PC-9 (cell line): ENCODE measurements at regions of chr6 and their contacts with region 1.

Region 1: GRCh38 chr6:138188278-138188941 is 26.7 kb downstream of the ARFGEF3 start:
- DNase-seq: peak in 1 of 2 experiments; percentile 43
- H3K4me3 ChIP-seq: no peak overlapping the region
- H3K27ac ChIP-seq: no peak overlapping the region
- H3K4me1 ChIP-seq: peaks cover 10% of the 10 kb centered on the region
- H3K27me3 ChIP-seq: no peaks in the 10 kb centered on the region
- CTCF ChIP-seq: no peak

Region 2: DNA sequence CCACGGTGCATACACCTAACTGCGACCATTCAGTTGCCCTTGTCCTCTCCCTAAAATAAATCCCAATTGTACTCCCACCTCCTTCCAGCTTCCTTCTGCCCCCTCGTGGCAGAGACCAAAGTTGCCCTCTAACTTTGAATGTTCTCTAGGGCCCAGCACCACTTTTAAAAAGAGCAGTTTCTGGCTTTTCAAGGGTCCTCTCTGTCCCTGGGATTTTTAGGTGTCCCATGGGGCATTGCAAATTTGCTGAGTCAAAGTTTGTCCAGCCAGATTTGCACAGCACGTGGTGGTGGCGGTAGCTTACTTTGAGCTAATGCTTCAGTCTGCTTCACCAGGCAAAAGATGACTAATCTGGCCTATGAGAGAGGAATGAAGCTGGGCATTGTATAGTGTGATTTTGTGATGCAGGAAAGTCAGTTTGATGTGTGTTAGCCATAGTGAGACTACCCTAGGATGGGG is 181.4 kb before region 1 on chr6:
- CTCF ChIA-PET with region 1: interaction called, 15 read pairs
- POLR2A ChIA-PET with region 1: no interaction called
- intact Hi-C with region 1: no loop called
- DNase-seq: peak; percentile 38 to 45
- H3K4me3 ChIP-seq: no peak overlapping the region
- H3K27ac ChIP-seq: no peak overlapping the region
- H3K4me1 ChIP-seq: peaks cover 16% of the 10 kb centered on the region
- H3K27me3 ChIP-seq: no peaks in the 10 kb centered on the region
- CTCF ChIP-seq: peak; percentile 92